Lower leg skin (tissue), 4 donors: ENCODE measurements at regions of chr17 and their contacts with region 1.

Region 1: GRCh38 chr17:42843358-42843934 is 934 bp upstream of the AOC2 start:
- DNase-seq: no peak
- H3K4me3 ChIP-seq: no peak overlapping the region
- CTCF ChIP-seq: peak in 1 of 3 donors; percentile 96
- POLR2A ChIP-seq: no peak

Region 2: GRCh38 chr17:42779936-42780850 is 63.3 kb before region 1 on chr17 and contains the start of gene WNK4:
- intact Hi-C with region 1: no loop called
- DNase-seq: peak in 1 of 2 donors; percentile 82
- H3K4me3 ChIP-seq: peak within 1 kb of the TSS; percentile 9
- CTCF ChIP-seq: peak in 1 of 3 donors; percentile 6
- POLR2A ChIP-seq: no peak
- total RNA-seq, gene WNK4: 0.62 to 1.0 TPM in 2 of 4 donors, not detected in the others

Region 3: DNA sequence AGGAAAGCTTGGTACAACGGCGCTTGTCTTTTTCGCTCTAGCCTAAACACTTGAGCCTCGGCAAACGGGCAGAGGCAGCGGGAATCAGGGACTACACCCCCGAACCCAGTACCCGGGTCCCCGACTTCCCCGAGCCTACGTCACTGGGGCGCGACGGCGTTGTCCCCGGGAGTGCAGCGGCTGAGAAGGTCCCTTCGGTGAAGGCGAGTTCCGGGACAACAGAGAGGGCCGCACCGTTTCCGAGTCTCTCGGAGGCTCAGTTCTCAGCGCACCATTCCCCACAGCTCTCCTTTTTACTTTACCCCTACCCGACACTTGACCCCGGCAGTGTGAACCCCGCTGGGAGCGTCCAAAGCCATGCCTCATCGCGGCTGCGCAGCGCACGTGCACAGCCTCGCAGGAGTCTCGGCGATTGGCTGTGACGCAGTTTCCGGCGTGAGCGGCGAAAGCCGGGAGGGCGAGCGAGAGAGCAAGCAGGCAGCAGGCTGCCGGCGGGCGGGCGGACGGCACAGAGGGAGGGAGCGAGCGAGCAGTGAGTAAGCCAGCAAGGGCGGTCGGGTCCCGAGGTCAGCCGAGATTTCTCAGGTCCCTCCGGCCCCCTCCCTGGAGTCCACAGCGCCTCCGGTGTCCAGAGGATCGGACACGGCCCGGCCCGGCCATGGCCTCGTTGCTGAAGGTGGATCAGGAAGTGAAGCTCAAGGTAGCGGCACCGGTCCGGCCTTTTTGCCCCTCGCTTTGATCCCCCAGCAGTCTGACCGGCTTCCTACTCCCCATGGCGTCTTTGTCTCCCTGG is 10.3 kb before region 1 on chr17 and contains the start of gene PSME3:
- intact Hi-C with region 1: no loop called
- DNase-seq: peak; percentile 82 to 97
- H3K4me3 ChIP-seq: peak within 1 kb of the TSS; percentile 69
- CTCF ChIP-seq: no peak
- POLR2A ChIP-seq: peak in 1 of 2 donors; percentile 15
- total RNA-seq, gene PSME3: 56.2 to 82.0 (median 75.1) TPM

Region 4: GRCh38 chr17:42937712-42938596 is 94.5 kb after region 1 on chr17:
- intact Hi-C with region 1: loop called (anchors 10 kb)
- DNase-seq: no peak
- H3K4me3 ChIP-seq: no peak overlapping the region
- CTCF ChIP-seq: no peak
- POLR2A ChIP-seq: no peak

Region 5: GRCh38 chr17:42997984-42998938 is 154.8 kb after region 1 on chr17 and contains the start of gene RPL27:
- intact Hi-C with region 1: loop called (anchors 5 kb)
- DNase-seq: peak; percentile 100
- H3K4me3 ChIP-seq: peak within 1 kb of the TSS; percentile 87
- CTCF ChIP-seq: peak in 1 of 3 donors; percentile 93
- POLR2A ChIP-seq: no peak
- total RNA-seq, gene RPL27: 1,091 to 1,783 (median 1,434) TPM

Region 6: DNA sequence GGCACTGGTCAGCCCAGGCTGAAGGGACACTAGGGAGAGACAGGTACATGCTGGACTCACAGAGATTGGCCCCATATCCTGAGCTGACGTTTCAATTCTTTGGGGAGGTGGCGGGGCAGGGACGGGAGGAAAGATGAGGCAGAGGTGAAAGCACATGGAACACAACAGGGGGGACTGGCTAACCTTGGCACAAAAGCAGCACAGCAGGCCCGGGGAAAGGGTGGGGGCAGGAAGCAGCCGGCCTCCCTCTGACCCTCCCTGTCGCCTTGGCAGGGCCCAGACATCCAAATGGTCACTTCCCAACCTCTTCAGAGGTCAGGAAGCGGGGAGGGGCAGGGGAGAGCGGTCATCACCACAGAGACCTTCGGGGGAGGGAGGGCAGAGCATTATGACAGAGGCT is 172.1 kb after region 1 on chr17:
- intact Hi-C with region 1: no loop called
- DNase-seq: peak in 1 of 2 donors; percentile 89
- H3K4me3 ChIP-seq: no peak overlapping the region
- CTCF ChIP-seq: no peak
- POLR2A ChIP-seq: no peak